Left colon (tissue), 2 donors: ENCODE measurements at regions of chr3 and their contacts with region 1.

Region 1: GRCh38 chr3:142993958-142994442 is 7.4 kb upstream of the U2SURP start:
- DNase-seq: peak in 1 of 2 donors; percentile 68
- ATAC-seq: peak; percentile 52

Region 2: DNA sequence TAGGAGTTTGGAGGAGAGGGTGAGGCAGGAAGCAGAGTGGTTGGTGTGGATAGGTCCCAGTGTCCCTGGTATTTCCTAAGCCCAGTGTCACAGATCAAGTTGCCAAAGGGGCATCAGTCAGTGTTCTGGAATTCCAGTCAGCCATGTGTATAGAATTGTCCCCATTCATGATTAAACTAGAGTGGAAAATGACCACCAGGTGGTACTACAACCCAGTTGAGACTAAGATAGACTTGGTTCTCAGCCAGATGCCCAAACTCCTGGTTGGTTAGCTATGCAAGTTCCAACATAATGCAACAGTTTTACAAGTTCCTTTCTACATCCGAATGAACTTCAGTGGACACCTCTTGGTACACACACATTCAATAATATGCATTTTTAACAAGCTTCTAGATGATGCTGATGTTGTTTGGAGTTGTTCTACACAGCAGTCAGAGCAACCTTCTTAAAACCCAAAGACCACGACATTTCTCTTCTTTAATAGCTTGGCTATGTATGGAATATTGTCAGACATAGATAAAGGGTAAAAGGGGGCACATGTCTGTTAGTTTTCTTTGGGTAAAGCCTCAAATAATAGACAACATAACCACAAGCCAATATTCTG is 407.1 kb before region 1 on chr3:
- intact Hi-C with region 1: loop called in 1 of 2 experiments (anchors 10 kb)
- DNase-seq: no peak
- ATAC-seq: peak; percentile 97